ENCODE measurements at regions of chr7 and their contacts with region 1.

Region 1: DNA sequence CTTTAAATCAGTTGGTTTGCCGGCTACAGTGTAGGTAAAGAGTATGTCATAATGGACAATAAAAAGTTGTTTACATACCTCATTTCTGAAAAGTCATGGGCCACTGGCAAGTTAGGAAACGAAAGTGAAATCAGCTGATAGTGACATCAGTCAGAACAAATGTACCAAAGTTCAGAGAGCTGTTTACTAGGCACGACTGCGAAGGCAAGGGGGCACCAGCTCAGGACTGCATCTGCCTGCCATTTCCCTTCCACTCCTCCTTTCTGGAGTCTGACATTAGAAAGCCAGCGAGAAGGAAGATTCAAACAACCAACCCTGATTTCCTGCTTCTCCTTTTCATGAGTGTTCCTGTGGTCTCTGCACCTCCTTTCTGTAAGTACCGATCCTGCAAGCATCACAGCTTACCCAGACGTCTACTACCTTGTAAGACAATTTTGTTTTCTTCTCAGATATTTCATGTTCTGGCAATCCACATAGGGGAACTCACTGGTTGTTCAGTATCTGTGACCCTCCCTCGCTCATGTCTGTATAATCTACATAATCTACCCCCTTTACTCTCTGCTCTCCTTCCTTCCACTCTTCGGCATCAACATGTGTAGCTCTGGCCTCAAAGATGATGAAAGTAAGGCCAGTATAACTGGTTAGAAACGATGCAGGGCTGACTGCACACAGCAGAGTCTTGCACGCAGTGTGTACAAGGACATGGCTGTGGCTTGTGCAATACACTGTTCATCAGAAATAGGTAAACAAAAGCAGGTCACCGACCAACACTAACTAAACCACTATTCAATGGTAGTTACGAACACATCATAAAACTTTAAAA is at the start of gene TMEM140:
- DNase-seq: peak; percentile 58 to 68
- ATAC-seq: peak; percentile 94
- total RNA-seq, gene TMEM140: 7.4 to 18.3 TPM

Region 2: GRCh38 chr7:134943764-134944400 is 204.2 kb before region 1 on chr7:
- intact Hi-C with region 1: no loop called
- DNase-seq: no peak
- ATAC-seq: no peak

Region 3: GRCh38 chr7:134986363-134987251 is 161.5 kb before region 1 on chr7 and contains the start of gene AGBL3:
- intact Hi-C with region 1: loop called in 1 of 2 experiments (anchors 5 kb)
- DNase-seq: peak; percentile 97 to 98
- ATAC-seq: peak; percentile 98
- total RNA-seq, gene AGBL3: 0.64 to 0.78 TPM

Measured in left colon (tissue), 2 donors.